Heart left ventricle (tissue), 16 donors: ENCODE measurements at regions of chr9 and their contacts with region 1.

Region 1: DNA sequence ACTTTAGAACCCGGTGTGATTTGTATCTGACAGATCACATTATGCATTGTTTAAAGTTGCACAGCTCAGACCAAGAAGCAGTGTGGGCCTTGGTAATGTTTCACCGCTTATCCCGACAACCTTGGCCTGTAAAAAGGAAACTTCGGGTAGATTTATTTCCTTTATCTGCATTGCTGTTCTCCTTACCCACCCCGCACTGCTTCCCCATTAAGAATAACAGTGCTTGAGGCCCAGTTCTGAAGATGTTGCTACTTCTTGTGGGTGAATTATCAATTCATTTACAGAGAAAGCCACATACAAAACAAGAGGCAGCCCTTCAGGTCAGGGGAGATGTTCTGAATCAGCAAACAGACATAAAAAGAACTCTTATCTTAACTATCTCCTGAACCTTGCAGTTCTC is 8.4 kb downstream of the SMARCA2 start:
- DNase-seq: no peak
- ATAC-seq: no peak
- H3K4me3 ChIP-seq: no peak overlapping the region
- H3K27ac ChIP-seq: peak overlapping the region; percentile 21 to 74 (median 70)
- H3K4me1 ChIP-seq: peaks cover 11 to 100% (median 89%) of the 10 kb centered on the region in 12 donors
- H3K27me3 ChIP-seq: no peaks in the 10 kb centered on the region
- CTCF ChIP-seq: no peak
- POLR2A ChIP-seq: no peak

Region 2: DNA sequence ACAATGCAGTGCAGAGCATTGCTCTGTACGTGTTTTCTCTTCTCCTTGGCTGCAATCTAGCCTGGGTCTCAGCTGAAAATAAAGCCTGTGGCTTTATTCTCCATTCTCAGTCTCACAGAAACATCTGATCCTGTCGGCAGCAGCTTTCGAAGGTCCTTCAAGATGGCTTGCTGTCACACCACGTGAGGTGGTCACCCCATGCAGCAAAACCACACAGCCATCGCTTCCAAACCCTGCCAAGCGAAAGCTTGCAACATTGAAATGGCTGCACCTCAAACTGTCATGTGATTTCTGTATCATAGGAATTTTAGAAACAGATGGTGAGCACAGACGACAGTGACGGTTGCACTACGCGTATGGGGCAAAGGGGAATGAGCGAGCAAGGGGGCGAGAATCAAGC is 106.9 kb before region 1 on chr9:
- intact Hi-C with region 1: no loop called
- DNase-seq: no peak
- ATAC-seq: no peak
- H3K4me3 ChIP-seq: no peak overlapping the region
- H3K27ac ChIP-seq: no peak overlapping the region
- H3K4me1 ChIP-seq: no peaks in the 10 kb centered on the region
- H3K27me3 ChIP-seq: peaks cover 0 to 40% (median 6%) of the 10 kb centered on the region in 9 donors
- CTCF ChIP-seq: no peak
- POLR2A ChIP-seq: no peak

Region 3: DNA sequence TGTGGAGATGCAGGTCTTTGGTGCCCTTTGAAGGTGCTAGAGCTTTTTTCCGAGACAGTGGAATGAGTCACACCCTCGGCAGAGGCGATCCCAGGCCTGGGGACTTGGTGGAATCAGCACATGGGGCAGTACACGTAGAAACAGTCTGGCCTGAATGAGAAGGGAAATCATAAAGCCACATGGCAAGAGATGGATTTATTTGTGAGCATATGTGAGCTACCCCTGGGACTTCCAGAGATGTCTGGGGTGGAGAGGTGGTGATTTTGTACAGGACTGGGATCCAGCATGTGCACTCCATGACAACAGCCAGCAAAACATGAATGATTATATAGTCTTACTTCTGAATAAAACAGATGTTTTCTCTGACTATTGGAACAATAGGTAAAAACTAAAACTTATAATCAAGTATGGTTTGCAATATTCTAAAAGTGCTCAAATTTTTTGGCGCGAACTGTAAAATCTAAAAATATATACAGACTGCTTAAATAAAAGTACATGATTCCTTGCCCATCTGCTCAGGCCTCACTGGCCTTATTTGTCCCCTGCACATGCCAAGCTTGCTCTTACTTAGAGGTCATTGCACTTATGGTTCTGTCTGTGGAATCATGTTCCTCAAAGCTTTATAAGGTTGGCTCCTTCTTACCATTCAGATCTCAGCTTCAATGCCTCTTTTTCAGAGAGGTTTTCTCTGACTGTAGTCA is 63.0 kb before region 1 on chr9:
- intact Hi-C with region 1: no loop called
- DNase-seq: no peak
- ATAC-seq: no peak
- H3K4me3 ChIP-seq: no peak overlapping the region
- H3K27ac ChIP-seq: no peak overlapping the region
- H3K4me1 ChIP-seq: peaks cover 0 to 8% (median 0%) of the 10 kb centered on the region in 12 donors
- H3K27me3 ChIP-seq: no peaks in the 10 kb centered on the region
- CTCF ChIP-seq: no peak
- POLR2A ChIP-seq: no peak

Region 4: GRCh38 chr9:2039294-2040190 is 16.0 kb after region 1 on chr9:
- intact Hi-C with region 1: loop called in 1 of 10 experiments (anchors 2 kb)
- DNase-seq: peak in 3 of 5 donors; percentile 26 to 62 (median 34)
- ATAC-seq: peak in 2 of 4 donors; percentile 65 to 81
- H3K4me3 ChIP-seq: peak overlapping the region in 3 of 12 donors; percentile 4 to 13 (median 12)
- H3K27ac ChIP-seq: peak overlapping the region in 9 of 12 donors; percentile 2 to 47 (median 30)
- H3K4me1 ChIP-seq: peaks cover 0 to 47% (median 5%) of the 10 kb centered on the region in 12 donors
- H3K27me3 ChIP-seq: no peaks in the 10 kb centered on the region
- CTCF ChIP-seq: no peak
- POLR2A ChIP-seq: no peak

Region 5: DNA sequence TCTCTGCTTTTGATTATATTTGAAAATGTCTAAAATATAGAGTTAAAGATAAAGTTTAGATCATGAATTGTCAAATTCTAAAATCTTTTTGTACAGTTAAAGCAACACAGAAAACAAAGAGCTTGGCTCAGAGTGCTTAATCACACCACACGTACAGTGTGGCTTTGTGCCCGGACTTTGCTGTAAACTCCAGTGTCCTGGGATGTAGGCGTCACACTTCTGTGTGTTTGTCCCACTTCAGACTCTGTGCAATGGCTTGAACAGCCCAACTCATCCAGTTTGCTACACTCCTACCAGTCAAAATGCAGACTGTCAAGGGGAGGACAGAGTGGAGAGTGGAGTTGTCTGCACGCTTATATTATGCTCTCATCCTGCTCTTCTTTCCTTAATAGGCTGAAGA is 36.9 kb after region 1 on chr9:
- intact Hi-C with region 1: loop called in 3 of 10 experiments (anchors 5 to 10 kb)
- DNase-seq: peak in 4 of 5 donors; percentile 25 to 44 (median 37)
- ATAC-seq: peak; percentile 80 to 95 (median 88)
- H3K4me3 ChIP-seq: no peak overlapping the region
- H3K27ac ChIP-seq: no peak overlapping the region
- H3K4me1 ChIP-seq: peaks cover 0 to 14% (median 0%) of the 10 kb centered on the region in 12 donors
- H3K27me3 ChIP-seq: no peaks in the 10 kb centered on the region
- CTCF ChIP-seq: no peak
- POLR2A ChIP-seq: no peak